Heart left ventricle (tissue), 16 donors: ENCODE measurements at regions of chr6 and their contacts with region 1.

Region 1: GRCh38 chr6:138109042-138109997 is 2.1 kb upstream of the PERP start:
- DNase-seq: peak in 4 of 5 donors; percentile 44 to 57 (median 50)
- ATAC-seq: peak in 1 of 4 donors; percentile 32
- H3K4me3 ChIP-seq: no peak overlapping the region
- H3K27ac ChIP-seq: no peak overlapping the region
- H3K4me1 ChIP-seq: peaks cover 0 to 19% (median 6%) of the 10 kb centered on the region in 12 donors
- H3K27me3 ChIP-seq: peaks cover 0 to 38% (median 5%) of the 10 kb centered on the region in 9 donors
- CTCF ChIP-seq: peak; percentile 91 to 99 (median 96)
- POLR2A ChIP-seq: no peak

Region 2: GRCh38 chr6:137623293-137623692 is 486.0 kb before region 1 on chr6:
- intact Hi-C with region 1: no loop called
- DNase-seq: no peak
- ATAC-seq: no peak
- H3K4me3 ChIP-seq: no peak overlapping the region
- H3K27ac ChIP-seq: no peak overlapping the region
- H3K4me1 ChIP-seq: no peaks in the 10 kb centered on the region
- H3K27me3 ChIP-seq: peaks cover 0 to 25% (median 0%) of the 10 kb centered on the region in 9 donors
- CTCF ChIP-seq: no peak
- POLR2A ChIP-seq: no peak

Region 3: DNA sequence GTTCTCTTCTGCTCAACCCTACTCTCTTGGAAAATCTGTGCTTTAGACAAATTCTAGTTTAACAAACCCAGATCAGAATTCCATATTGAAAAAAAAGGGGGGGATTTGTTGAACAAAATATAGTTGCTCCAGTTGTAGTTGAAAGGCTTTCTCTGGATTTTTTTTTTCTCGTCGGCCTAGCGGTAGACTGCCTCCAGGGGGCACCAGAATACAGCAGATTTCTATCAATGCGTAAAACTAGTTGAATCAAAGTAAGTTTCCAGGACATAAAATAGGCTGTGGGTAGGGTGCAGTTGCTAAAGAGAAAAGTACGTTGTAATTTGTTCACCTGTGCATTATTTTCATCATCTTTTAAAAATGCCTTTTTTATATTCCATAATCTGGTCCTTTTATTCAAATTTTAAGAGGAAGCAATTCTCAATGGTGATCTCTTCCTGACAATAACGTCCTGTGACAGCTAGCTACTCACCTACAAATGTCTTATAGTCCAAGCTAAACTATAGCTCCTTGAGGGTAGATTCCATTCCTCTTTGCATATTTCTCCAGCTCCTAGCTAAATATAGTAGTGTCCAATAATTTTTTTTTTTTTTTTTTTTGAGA is 107.5 kb before region 1 on chr6:
- intact Hi-C with region 1: loop called (anchors 1 to 2 kb)
- DNase-seq: peak in 4 of 5 donors; percentile 34 to 57 (median 35)
- ATAC-seq: peak in 1 of 4 donors; percentile 51
- H3K4me3 ChIP-seq: no peak overlapping the region
- H3K27ac ChIP-seq: no peak overlapping the region
- H3K4me1 ChIP-seq: no peaks in the 10 kb centered on the region
- H3K27me3 ChIP-seq: no peaks in the 10 kb centered on the region
- CTCF ChIP-seq: peak; percentile 73 to 90 (median 86)
- POLR2A ChIP-seq: no peak

Region 4: GRCh38 chr6:138052757-138053156 is 56.6 kb before region 1 on chr6:
- intact Hi-C with region 1: no loop called
- DNase-seq: no peak
- ATAC-seq: no peak
- H3K4me3 ChIP-seq: no peak overlapping the region
- H3K27ac ChIP-seq: no peak overlapping the region
- H3K4me1 ChIP-seq: no peaks in the 10 kb centered on the region
- H3K27me3 ChIP-seq: no peaks in the 10 kb centered on the region
- CTCF ChIP-seq: no peak
- POLR2A ChIP-seq: no peak

Region 5: DNA sequence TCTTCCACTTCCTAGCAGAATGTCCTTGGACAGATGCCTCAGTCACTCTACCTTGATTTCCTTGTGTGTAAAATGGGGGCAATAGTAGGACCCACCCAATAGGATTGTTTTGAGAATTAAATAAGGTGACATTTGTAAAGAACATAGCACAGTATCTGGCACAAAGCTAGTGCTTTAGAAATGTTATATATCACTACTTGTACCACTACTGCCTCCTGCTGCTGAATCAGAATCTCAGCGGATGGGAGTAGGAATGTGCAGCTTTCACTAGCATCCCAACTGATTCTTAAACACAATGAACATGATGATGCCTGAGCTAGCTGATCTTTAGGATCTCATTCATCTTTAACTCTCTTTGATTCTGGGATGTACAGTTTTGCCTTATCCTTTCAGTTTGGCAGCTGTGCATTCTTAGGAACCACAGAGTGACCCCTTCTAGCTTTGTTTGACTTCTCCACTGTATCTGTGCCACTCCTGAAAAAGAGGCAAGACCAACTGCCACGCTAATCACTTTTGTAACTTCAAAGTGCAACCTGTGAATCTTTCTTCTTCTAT is 101.8 kb after region 1 on chr6:
- intact Hi-C with region 1: no loop called
- DNase-seq: no peak
- ATAC-seq: no peak
- H3K4me3 ChIP-seq: no peak overlapping the region
- H3K27ac ChIP-seq: no peak overlapping the region
- H3K4me1 ChIP-seq: peaks cover 0 to 10% (median 1%) of the 10 kb centered on the region in 12 donors
- H3K27me3 ChIP-seq: no peaks in the 10 kb centered on the region
- CTCF ChIP-seq: peak in 2 of 12 donors; percentile 16 to 19
- POLR2A ChIP-seq: no peak